ENCODE measurements at regions of chr19 and their contacts with region 1.

Region 1: GRCh38 chr19:41859618-41860418 is at the start of gene RPS19:
- DNase-seq: peak; percentile 97
- H3K4me3 Mint-ChIP-seq: peak within 1 kb of the TSS; percentile 95
- H3K27ac Mint-ChIP-seq: peak within 1 kb of the TSS; percentile 97
- H3K4me1 Mint-ChIP-seq: peaks cover 39% of the 10 kb centered on the region
- H3K27me3 Mint-ChIP-seq: peaks cover 9% of the 10 kb centered on the region
- total RNA-seq, gene RPS19: 2,887 and 2,906 TPM in 2 replicates

Region 2: DNA sequence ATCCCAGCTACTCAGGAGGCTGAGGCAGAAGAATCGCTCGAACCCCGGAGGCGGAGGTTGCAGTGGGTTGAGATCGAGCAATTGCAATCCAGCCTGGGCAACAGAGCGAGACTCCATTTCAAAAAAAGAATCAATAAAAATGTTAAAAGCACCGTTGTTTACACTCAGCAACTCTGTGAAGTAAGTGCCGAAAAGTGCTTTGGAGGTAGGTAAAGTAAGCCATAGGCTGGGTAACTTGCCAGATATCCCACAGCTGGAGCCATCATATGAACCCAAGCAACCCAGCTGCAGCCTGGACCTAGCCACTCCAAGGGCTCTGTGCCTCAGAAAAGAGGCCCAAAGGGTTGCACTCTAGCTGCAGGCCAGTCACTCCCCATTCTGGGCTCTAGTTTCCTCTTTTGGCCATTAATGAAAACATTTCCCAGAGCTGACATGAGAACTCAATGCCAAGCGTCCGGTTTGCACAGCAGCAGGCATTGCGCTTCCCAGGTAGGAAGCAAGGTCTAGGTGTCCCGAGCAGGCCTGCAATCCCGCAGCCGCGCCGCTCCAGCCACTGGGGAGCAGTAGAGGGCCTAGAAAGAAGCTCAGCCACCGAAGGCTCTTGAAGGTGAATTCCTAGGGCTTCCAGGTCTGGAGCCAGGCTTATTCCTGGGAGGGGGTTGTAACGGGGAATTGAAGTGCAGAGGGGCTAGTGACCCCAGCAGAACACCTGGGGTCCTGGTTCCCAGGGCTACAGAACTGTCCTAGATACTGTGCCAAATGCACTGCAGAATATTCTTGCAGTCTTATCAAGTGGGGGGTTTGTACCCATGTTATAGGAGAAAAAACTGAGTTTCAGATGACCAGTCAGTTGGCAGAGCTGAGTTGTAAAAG is 13.2 kb after region 1 on chr19:
- intact Hi-C with region 1: loop called (anchors 1 kb)
- DNase-seq: peak; percentile 49
- H3K4me3 Mint-ChIP-seq: peak overlapping the region; percentile 29
- H3K27ac Mint-ChIP-seq: peak overlapping the region; percentile 88
- H3K4me1 Mint-ChIP-seq: peaks cover 84% of the 10 kb centered on the region
- H3K27me3 Mint-ChIP-seq: no peaks in the 10 kb centered on the region

Region 3: GRCh38 chr19:41951686-41952172 is 91.9 kb after region 1 on chr19:
- intact Hi-C with region 1: loop called (anchors 1 kb)
- DNase-seq: peak; percentile 75
- H3K4me3 Mint-ChIP-seq: no peak overlapping the region
- H3K27ac Mint-ChIP-seq: no peak overlapping the region
- H3K4me1 Mint-ChIP-seq: peaks cover 26% of the 10 kb centered on the region
- H3K27me3 Mint-ChIP-seq: no peaks in the 10 kb centered on the region

Region 4: GRCh38 chr19:42032431-42032830 is 172.6 kb after region 1 on chr19:
- intact Hi-C with region 1: loop called (anchors 1 kb)
- DNase-seq: no peak
- H3K4me3 Mint-ChIP-seq: no peak overlapping the region
- H3K27ac Mint-ChIP-seq: no peak overlapping the region
- H3K4me1 Mint-ChIP-seq: peaks cover 8% of the 10 kb centered on the region
- H3K27me3 Mint-ChIP-seq: peaks cover 9% of the 10 kb centered on the region

Region 5: DNA sequence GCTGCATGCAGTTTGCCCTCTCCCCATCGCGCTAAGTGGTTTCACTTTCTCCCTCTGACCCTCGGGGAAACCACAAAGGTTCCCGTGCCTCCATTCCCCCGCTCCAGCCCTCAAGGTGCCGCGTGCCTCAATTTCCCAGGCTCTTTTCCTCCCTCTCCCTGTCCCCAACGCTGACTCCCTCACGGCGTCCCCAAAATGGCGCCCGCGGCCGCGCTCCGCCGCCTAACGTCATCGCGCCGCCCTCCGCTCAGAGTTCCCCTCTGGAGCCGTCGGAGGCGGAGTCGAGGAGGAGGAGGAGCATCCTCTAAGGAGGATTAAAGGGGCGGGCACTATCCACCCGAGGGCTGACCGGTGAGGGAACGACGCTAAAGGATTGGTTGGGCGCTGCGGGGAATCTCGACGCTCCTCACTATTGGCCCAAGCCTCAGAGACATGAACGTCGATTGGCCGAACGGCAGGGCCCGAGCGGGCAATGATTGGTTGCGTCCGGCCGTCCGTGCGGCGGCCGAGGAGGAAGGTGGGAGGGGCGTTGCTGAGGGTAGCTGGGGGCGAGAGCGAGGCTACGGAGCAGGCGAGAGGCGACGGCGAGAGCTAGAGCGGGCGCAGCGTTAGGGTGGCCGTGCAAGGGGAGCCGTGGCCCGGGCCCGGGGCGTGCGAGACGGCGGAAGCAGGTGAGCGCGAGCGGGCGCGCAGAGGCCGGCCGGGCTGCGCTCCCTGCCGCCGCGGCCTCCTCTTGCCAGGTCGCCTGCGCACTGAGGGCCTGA is 216.0 kb after region 1 on chr19 and contains the start of gene ZNF574:
- intact Hi-C with region 1: loop called (anchors 1 kb)
- DNase-seq: peak; percentile 97
- H3K4me3 Mint-ChIP-seq: peak within 1 kb of the TSS; percentile 97
- H3K27ac Mint-ChIP-seq: peak within 1 kb of the TSS; percentile 99
- H3K4me1 Mint-ChIP-seq: peaks cover 37% of the 10 kb centered on the region
- H3K27me3 Mint-ChIP-seq: peaks cover 1% of the 10 kb centered on the region
- total RNA-seq, gene ZNF574: 17.5 and 17.8 TPM in 2 replicates

Region 6: DNA sequence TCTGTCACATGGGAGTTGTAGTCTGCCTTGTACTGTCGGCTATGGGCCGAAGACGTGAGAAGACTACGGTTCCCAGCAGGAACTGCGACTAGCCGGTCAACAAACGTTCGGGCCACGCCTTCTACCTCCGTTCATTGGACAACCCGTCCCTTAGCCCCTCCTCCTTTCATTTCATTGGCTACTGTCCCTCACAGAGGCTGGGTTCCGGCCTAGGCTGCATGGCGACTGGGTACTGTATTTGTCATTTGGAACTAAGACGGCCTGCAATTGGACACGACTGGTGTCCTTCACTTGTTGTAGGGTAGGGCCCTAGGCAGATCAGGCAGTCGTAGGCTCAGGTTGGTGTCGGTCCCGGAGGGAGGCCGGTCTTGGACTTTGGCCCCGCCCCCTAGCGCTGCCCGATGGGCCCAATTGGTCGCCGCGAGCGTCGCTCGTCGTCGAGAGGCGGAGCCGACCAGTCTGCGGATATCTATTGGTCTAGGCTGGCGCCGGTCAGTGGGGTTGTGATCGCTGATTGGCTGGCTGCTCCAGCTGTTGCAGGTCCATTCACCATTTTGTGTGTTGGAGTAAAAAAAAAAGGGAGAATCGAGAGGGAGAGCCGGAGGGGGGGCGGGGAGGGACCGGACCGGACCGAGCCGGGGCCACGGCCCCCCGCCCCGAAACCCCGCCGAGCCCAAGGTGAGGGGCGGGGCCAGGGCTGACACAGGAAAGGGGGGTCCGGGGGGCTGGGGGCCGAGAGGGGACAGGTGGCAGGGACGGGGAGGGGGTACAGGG is 409.1 kb after region 1 on chr19 and contains the start of gene CIC:
- intact Hi-C with region 1: loop called (anchors 1 kb)
- DNase-seq: peak; percentile 99
- H3K4me3 Mint-ChIP-seq: no peak within 1 kb of the TSS
- H3K27ac Mint-ChIP-seq: peak within 1 kb of the TSS; percentile 99
- H3K4me1 Mint-ChIP-seq: peaks cover 30% of the 10 kb centered on the region
- H3K27me3 Mint-ChIP-seq: no peaks in the 10 kb centered on the region
- total RNA-seq, gene CIC: 66.9 and 68.0 TPM in 2 replicates